ENCODE measurements at regions of chr22 and their contacts with region 1.

Region 1: GRCh38 chr22:36454916-36455570 is 26.4 kb downstream of the TXN2 start:
- DNase-seq: peak; percentile 94
- H3K4me3 Mint-ChIP-seq: peak overlapping the region; percentile 72
- H3K27ac Mint-ChIP-seq: peak overlapping the region; percentile 34
- H3K4me1 Mint-ChIP-seq: peaks cover 39% of the 10 kb centered on the region
- H3K27me3 Mint-ChIP-seq: no peaks in the 10 kb centered on the region

Region 2: GRCh38 chr22:36339171-36340065 is 115.6 kb before region 1 on chr22:
- intact Hi-C with region 1: loop called (anchors 2 kb)
- DNase-seq: peak; percentile 32
- H3K4me3 Mint-ChIP-seq: peak overlapping the region; percentile 58
- H3K27ac Mint-ChIP-seq: peak overlapping the region; percentile 92
- H3K4me1 Mint-ChIP-seq: peaks cover 90% of the 10 kb centered on the region
- H3K27me3 Mint-ChIP-seq: no peaks in the 10 kb centered on the region

Region 3: GRCh38 chr22:36405671-36406538 is 49.1 kb before region 1 on chr22:
- intact Hi-C with region 1: loop called (anchors 1 kb)
- DNase-seq: peak; percentile 33
- H3K4me3 Mint-ChIP-seq: peak overlapping the region; percentile 46
- H3K27ac Mint-ChIP-seq: peak overlapping the region; percentile 96
- H3K4me1 Mint-ChIP-seq: peaks cover 34% of the 10 kb centered on the region
- H3K27me3 Mint-ChIP-seq: no peaks in the 10 kb centered on the region

Region 4: GRCh38 chr22:36481393-36482168 is 26.5 kb after region 1 on chr22 and contains the start of gene TXN2:
- intact Hi-C with region 1: loop called (anchors 1 kb)
- DNase-seq: peak; percentile 91
- H3K4me3 Mint-ChIP-seq: peak within 1 kb of the TSS; percentile 97
- H3K27ac Mint-ChIP-seq: peak within 1 kb of the TSS; percentile 92
- H3K4me1 Mint-ChIP-seq: peaks cover 12% of the 10 kb centered on the region
- H3K27me3 Mint-ChIP-seq: peaks cover 1% of the 10 kb centered on the region
- total RNA-seq, gene TXN2: 95.2 and 95.3 TPM in 2 replicates

Region 5: DNA sequence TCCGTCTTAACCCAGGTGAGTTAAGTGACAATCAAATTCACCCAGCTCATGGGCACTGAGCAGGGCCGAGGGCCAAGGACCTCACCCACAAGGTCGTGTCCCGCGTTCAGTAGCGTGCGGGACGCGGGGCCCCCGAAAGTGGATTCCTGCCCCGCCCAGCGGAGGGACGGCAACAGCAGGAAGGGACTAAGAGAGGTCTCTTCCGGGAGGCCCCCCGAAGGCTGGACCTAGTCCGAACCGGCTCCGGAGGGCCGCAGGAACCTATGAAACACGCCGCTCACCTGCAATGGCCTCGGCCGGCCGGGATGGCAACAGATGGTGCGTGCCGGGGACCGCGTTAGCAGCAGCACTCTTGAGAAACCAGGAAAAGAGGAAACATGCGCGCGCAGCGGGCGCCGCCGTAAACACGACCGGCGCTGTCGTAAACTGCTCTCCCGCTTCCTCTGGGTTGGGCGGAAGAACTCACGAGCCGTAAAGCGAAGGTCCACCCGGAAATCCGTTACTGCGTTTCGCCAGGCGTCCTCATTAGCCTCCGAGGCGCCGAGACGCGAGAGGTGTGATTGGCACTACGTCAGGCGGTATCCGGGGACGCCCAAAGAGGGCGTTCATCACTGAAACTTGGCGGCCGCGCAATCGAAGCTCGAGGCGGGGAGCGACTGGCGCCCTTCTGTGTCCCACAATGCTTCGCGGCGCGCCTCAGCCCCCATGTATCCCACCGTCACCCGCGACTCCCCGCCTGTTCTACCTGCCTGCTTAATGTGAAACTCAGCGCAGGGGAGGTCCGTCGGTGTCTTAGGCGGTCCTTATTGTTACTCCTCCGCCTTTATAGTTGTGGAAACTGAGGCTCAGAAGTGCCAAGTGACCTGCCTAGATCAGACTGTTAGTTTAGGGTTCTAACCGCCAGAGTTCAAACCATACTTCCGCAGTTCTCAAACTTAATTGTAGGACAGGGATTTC is 74.0 kb after region 1 on chr22 and contains the start of gene EIF3D:
- intact Hi-C with region 1: loop called (anchors 1 kb)
- DNase-seq: peak; percentile 99
- H3K4me3 Mint-ChIP-seq: peak within 1 kb of the TSS; percentile 96
- H3K27ac Mint-ChIP-seq: peak within 1 kb of the TSS; percentile 99
- H3K4me1 Mint-ChIP-seq: peaks cover 24% of the 10 kb centered on the region
- H3K27me3 Mint-ChIP-seq: peaks cover 2% of the 10 kb centered on the region
- total RNA-seq, gene EIF3D: 322 and 323 TPM in 2 replicates

Region 6: GRCh38 chr22:36781656-36782627 is 326.9 kb after region 1 on chr22:
- intact Hi-C with region 1: no loop called
- DNase-seq: peak; percentile 86
- H3K4me3 Mint-ChIP-seq: peak overlapping the region; percentile 52
- H3K27ac Mint-ChIP-seq: peak overlapping the region; percentile 95
- H3K4me1 Mint-ChIP-seq: peaks cover 38% of the 10 kb centered on the region
- H3K27me3 Mint-ChIP-seq: peaks cover 6% of the 10 kb centered on the region